Naive thymus-derived CD8-positive, alpha-beta T cell (primary cell): ENCODE measurements at regions of chr2 and their contacts with region 1.

Region 1: DNA sequence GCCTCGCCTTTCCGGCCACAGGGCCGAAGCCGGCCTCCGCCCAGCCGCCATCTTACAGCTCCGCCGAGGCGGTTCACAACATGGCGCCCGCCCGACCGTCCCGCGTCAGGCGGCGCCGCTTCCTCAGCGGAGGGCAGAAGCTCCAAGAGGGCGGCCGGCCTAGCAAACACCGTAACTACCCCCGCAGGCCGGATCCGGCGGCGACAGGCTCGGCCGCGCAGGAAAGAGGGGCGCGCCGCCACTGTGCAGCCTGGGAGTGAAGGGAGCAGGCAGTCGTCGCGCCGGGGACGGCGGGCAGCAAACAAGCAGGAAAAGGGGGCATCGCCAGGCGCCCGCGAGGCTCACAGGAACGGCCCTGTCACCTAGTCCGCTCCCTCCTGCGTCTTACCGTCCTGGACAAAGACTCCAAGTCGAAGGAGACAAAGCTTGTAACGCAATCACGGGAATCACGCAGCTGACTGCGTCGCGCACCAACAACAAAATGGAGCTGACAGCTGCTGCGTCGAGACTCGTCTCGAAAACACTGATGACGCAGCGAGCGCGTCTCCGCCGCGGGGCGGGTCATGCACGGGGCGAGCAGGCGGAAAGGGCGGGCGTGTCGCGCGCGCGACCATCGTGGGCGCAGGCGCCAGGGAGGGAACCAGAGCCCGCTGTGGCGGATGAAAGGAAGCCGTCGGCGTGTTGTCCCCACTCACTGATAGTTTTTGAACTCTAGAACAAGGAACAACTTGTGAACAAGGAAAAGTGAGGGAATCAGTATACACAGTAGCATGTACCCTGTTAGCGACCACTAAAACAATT is at the start of gene CLK1:
- DNase-seq: peak; percentile 92 to 98 (median 96)
- ATAC-seq: peak; percentile 75 to 76
- H3K4me3 Mint-ChIP-seq: peak within 1 kb of the TSS; percentile 85 to 100 (median 95)
- H3K27ac Mint-ChIP-seq: peak within 1 kb of the TSS; percentile 90 to 100 (median 99)
- H3K4me1 Mint-ChIP-seq: peaks cover 23 to 53% (median 45%) of the 10 kb centered on the region in 4 donors
- H3K27me3 Mint-ChIP-seq: no peaks in the 10 kb centered on the region
- polyA plus RNA-seq, gene CLK1: 13.6 to 45.3 (median 15.5) TPM

Region 2: GRCh38 chr2:200677721-200678585 is 186.4 kb before region 1 on chr2:
- POLR2A ChIA-PET with region 1: no interaction called
- DNase-seq: no peak
- ATAC-seq: no peak
- H3K4me3 Mint-ChIP-seq: no peak overlapping the region
- H3K27ac Mint-ChIP-seq: peak overlapping the region in 1 of 10 donors; percentile 3
- H3K4me1 Mint-ChIP-seq: peaks cover 0 to 8% (median 6%) of the 10 kb centered on the region in 4 donors
- H3K27me3 Mint-ChIP-seq: peaks cover 0 to 4% (median 3%) of the 10 kb centered on the region in 5 donors

Region 3: DNA sequence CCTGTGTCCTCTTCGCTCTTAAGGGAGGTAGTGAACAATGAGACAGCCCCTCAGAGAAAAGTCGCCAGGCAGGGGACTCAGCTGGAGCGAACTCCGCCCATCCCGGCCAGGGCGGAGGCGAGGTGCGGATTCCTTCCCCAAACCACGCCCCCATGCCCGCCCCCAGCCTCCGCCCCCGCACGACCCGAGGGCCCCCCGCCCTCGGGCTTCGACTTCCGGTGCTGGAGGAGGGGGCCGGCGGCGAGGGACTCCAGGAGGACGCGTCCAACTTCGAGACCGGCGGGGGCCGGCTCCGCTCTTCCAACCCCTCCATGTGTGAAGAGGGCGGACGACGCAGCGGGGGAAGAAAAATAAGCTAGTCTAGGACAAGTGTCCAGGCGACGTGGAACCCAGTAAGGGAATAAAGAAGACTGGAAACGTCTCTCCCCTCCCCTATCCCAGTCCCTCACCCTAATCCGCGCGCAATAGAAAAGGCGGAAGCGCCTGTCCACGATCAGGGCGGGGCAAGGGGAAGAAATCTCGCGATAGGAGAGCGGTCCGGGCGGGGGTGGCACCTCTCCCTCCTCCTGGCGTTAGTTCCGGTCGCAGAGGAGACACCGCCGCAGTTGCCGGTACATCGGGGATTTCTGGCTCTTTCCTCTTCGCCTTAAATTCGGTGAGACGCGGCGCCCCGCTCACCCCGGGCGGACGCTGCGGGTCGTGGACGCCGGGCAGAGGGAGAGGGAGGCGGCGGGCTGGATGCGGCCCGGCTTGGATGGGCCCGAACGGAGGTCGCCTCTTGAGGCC is 52.8 kb before region 1 on chr2 and contains the start of gene BZW1:
- POLR2A ChIA-PET with region 1: interaction called, 51 read pairs
- DNase-seq: peak; percentile 95 to 99 (median 98)
- ATAC-seq: peak; percentile 78 to 85
- H3K4me3 Mint-ChIP-seq: peak within 1 kb of the TSS; percentile 95 to 99 (median 98)
- H3K27ac Mint-ChIP-seq: peak within 1 kb of the TSS; percentile 94 to 99 (median 99)
- H3K4me1 Mint-ChIP-seq: peaks cover 26 to 52% (median 46%) of the 10 kb centered on the region in 4 donors
- H3K27me3 Mint-ChIP-seq: no peaks in the 10 kb centered on the region
- polyA plus RNA-seq, gene BZW1: 222 to 285 (median 243) TPM

Region 4: GRCh38 chr2:200828104-200828503 is 36.3 kb before region 1 on chr2:
- POLR2A ChIA-PET with region 1: interaction called, 11 read pairs
- DNase-seq: no peak
- ATAC-seq: no peak
- H3K4me3 Mint-ChIP-seq: no peak overlapping the region
- H3K27ac Mint-ChIP-seq: peak overlapping the region in 6 of 10 donors; percentile 4 to 68 (median 26)
- H3K4me1 Mint-ChIP-seq: peaks cover 1 to 14% (median 8%) of the 10 kb centered on the region in 4 donors
- H3K27me3 Mint-ChIP-seq: no peaks in the 10 kb centered on the region

Region 5: GRCh38 chr2:200888704-200889625 is 24.6 kb after region 1 on chr2 and contains the starts of genes NIF3L1 and PPIL3:
- POLR2A ChIA-PET with region 1: interaction called, 140 read pairs
- DNase-seq: peak; percentile 86 to 98 (median 96)
- ATAC-seq: peak; percentile 79 to 80
- H3K4me3 Mint-ChIP-seq: peak within 1 kb of the TSS; percentile 90 to 99 (median 96)
- H3K27ac Mint-ChIP-seq: peak within 1 kb of the TSS; percentile 94 to 100 (median 98)
- H3K4me1 Mint-ChIP-seq: peaks cover 28 to 64% (median 55%) of the 10 kb centered on the region in 4 donors
- H3K27me3 Mint-ChIP-seq: no peaks in the 10 kb centered on the region
- polyA plus RNA-seq, gene NIF3L1: 15.6 to 24.0 (median 18.7) TPM
- polyA plus RNA-seq, gene PPIL3: 22.3 to 38.3 (median 29.6) TPM

Region 6: DNA sequence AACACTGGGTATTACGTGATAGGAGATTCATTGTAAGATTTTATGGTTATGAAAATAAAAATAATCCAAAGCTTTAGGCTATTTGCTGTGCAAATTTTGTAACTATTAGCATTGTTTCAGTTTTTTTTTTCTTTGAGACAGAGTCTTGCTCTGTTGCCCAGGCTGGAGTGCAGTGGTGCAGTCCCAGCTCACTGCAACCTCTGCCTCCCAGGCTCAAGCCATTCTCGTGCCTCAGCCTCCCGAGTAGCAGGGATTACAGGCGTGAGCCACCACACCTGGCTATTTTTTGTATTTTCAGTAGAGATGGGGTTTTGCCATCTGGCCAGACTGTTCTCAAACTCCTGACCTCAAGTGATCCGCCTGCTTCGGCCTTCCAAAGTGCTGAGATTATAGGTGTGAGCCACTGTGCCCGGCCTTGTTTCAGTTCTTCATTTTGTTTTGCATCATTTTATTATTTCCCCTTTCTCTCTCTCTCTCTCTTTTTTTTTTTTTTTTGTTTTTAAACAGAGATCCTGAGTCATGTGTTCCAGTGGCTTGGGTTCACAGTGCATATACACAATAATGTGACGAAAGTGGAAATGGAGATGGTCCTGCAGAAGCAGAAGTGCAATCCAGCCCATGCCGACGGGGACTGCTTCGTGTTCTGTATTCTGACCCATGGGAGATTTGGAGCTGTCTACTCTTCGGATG is 344.3 kb after region 1 on chr2:
- POLR2A ChIA-PET with region 1: interaction called, 10 read pairs
- DNase-seq: peak in 1 of 10 donors; percentile 21
- ATAC-seq: peak in 1 of 2 donors; percentile 23
- H3K4me3 Mint-ChIP-seq: peak overlapping the region in 1 of 10 donors; percentile 45
- H3K27ac Mint-ChIP-seq: peak overlapping the region in 6 of 10 donors; percentile 20 to 74 (median 43)
- H3K4me1 Mint-ChIP-seq: peaks cover 16 to 45% (median 42%) of the 10 kb centered on the region in 4 donors
- H3K27me3 Mint-ChIP-seq: no peaks in the 10 kb centered on the region

Region 7: DNA sequence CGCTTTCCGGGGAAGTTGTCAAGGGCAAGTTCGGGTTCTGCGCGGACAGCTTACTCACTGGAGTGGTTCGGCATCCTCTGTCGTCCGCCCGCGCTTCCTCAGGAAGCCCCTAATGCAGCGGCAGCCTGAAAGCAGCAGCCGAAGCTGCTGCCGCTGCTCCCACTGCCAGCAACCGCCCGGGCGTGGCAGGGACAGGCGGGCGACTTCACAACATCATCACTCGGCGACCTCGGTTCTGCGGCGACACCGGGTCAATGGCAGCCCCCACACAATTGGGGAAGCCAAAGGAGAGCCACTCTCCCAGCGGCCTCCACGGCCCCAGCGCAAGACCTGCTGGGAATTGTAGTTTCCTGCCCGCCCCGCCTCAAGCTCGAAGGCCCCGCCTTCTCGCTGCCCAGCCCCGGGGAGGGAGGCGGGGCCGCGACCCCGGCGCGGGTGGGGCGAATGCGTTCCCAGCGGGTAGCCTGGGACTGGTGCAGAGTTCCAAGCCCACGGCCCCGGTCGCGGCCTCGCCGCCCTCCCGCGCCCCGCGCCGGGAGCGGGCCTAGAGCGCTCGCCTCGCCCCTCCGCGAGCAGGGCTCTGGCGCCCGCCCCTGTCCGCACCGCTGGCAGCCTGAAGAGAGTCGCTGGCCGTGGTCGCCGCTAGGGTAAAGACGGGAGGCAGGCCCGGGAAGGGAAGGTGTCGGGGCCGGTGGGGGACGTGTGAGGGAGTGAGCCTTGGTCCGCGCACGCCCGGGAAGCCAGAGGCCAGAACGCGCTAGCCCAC is 587.1 kb after region 1 on chr2 and contains the starts of genes STRADB and TRAK2:
- POLR2A ChIA-PET with region 1: interaction called, 10 read pairs
- DNase-seq: peak; percentile 90 to 97 (median 94)
- ATAC-seq: peak; percentile 85 to 87
- H3K4me3 Mint-ChIP-seq: peak within 1 kb of the TSS; percentile 67 to 98 (median 95)
- H3K27ac Mint-ChIP-seq: peak within 1 kb of the TSS; percentile 84 to 98 (median 96)
- H3K4me1 Mint-ChIP-seq: peaks cover 19 to 57% (median 50%) of the 10 kb centered on the region in 4 donors
- H3K27me3 Mint-ChIP-seq: no peaks in the 10 kb centered on the region
- polyA plus RNA-seq, gene STRADB: 31.5 to 33.8 (median 33.5) TPM
- polyA plus RNA-seq, gene TRAK2: 20.9 to 30.7 (median 24.7) TPM